K562 (cell line): ENCODE measurements at regions of chr1 and their contacts with region 1.

Region 1: GRCh38 chr1:244272471-244273261 is 179.0 kb downstream of the ADSS2 start:
- DNase-seq: peak; percentile 83 to 90 (median 89)
- ATAC-seq: peak; percentile 92
- H3K4me3 ChIP-seq: no peak overlapping the region
- H3K27ac ChIP-seq: no peak overlapping the region
- H3K4me1 ChIP-seq: peaks cover 6 to 12% of the 10 kb centered on the region in 2 experiments; a peak in 4 of 5 replicates
- H3K27me3 ChIP-seq: peaks cover 14 to 28% of the 10 kb centered on the region in 2 experiments; a peak in 3 of 5 replicates
- CTCF ChIP-seq: peak; percentile 98 to 100 (median 99)
- EP300 ChIP-seq: no peak
- POLR2A ChIP-seq: no peak
- RAD21 ChIP-seq: peak; percentile 99 to 100

Region 2: DNA sequence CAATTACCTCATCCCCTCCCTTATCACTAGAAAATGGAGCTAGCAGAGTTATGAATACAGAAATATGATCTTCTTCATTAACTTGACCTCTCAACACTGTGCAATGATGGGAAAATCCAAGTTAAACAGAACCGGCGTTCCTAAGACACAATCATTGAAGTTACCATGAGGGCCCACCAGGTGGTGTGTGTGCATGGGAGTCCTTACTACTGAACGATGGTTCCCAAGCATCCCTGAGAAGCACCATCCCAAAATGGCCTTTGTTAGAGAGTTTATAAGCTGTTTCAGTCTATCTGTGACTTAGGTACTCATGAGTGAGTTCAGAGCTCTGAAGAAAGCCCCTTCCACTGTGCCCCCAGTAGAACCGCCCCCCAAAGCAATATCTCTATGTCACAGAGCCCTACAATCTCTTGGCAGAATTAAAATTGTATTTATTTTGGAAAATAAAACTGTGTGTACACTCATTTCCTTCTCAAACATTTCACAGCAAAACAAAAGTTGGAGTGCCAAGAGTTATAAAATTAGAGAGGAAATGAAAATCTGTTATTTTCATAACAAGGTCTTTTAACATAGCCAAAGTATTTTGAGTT is 1805.0 kb before region 1 on chr1:
- CTCF ChIA-PET with region 1: no interaction called
- POLR2A ChIA-PET with region 1: no interaction called
- in situ Hi-C with region 1: loop called (anchors 25 kb)
- intact Hi-C with region 1: loop called (anchors 5 kb)
- DNase-seq: peak; percentile 42 to 54 (median 50)
- ATAC-seq: peak; percentile 88
- H3K4me3 ChIP-seq: no peak overlapping the region
- H3K27ac ChIP-seq: no peak overlapping the region
- H3K4me1 ChIP-seq: no peaks in the 10 kb centered on the region
- H3K27me3 ChIP-seq: no peaks in the 10 kb centered on the region
- CTCF ChIP-seq: peak; percentile 50 to 59 (median 58)
- EP300 ChIP-seq: no peak
- POLR2A ChIP-seq: no peak
- RAD21 ChIP-seq: peak; percentile 34 to 67

Region 3: DNA sequence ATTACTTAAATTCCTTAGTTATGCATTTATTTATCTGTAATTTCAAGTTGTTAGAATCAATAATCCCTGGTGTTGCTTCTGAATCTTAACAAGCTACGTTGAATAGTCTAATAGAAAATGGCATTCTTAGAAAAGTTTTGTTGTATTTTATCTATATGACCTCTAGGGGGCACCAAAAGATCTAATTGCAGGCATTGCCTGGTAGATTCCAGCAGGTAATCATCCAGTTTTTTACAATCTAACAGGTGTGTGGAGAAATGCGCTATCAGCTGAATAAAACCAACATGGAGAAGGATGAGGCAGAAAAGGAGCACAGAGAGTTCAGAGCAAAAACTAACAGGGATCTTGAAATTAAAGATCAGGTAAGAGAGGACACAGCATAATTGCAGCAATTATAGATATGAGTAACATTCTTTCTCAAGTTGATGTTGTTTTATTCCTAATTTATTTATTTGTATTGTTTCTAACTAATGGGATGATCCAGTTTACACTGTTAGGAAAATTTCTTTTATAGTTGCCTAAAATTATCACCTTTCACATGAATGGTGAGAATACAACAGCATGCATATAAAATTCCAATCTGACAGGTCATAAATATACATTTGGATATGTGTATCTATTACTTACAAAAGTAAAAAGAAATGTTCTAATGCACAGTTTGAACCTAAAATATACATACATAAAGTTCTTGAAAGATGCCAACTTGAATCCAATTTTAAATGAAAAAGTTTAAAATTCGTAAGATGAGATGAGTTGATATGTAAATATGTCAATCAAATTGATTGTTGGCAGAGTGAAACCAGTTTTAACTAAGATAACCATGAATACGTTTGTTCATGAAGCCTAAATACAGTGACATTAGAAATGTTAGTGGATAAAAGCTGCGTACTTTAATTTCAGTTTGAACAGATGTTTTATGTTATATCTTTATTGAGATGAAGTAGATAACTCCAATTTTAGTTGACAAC is 928.4 kb before region 1 on chr1:
- CTCF ChIA-PET with region 1: interaction called, 37 read pairs
- POLR2A ChIA-PET with region 1: no interaction called
- in situ Hi-C with region 1: loop called (anchors 10 kb)
- intact Hi-C with region 1: loop called (anchors 1 kb)
- DNase-seq: peak; percentile 53 to 61 (median 56)
- ATAC-seq: peak; percentile 71
- H3K4me3 ChIP-seq: no peak overlapping the region
- H3K27ac ChIP-seq: no peak overlapping the region
- H3K4me1 ChIP-seq: no peaks in the 10 kb centered on the region
- H3K27me3 ChIP-seq: no peaks in the 10 kb centered on the region
- CTCF ChIP-seq: peak; percentile 58 to 86 (median 66); a peak in 5 of 6 replicates
- EP300 ChIP-seq: no peak
- POLR2A ChIP-seq: no peak
- RAD21 ChIP-seq: peak; percentile 85 to 88

Region 4: GRCh38 chr1:243708210-243708609 is 564.5 kb before region 1 on chr1:
- CTCF ChIA-PET with region 1: interaction called, 6 read pairs
- POLR2A ChIA-PET with region 1: no interaction called
- in situ Hi-C with region 1: no loop called
- intact Hi-C with region 1: loop called (anchors 5 kb)
- DNase-seq: no peak
- ATAC-seq: no peak
- H3K4me3 ChIP-seq: no peak overlapping the region
- H3K27ac ChIP-seq: no peak overlapping the region
- H3K4me1 ChIP-seq: no peaks in the 10 kb centered on the region
- H3K27me3 ChIP-seq: no peaks in the 10 kb centered on the region
- CTCF ChIP-seq: peak in 1 of 3 experiments; percentile 14; a peak in 1 of 6 replicates
- EP300 ChIP-seq: no peak
- POLR2A ChIP-seq: no peak
- RAD21 ChIP-seq: peak; percentile 17 to 41; a peak in 3 of 4 replicates

Region 5: GRCh38 chr1:243946946-243947345 is 325.7 kb before region 1 on chr1:
- CTCF ChIA-PET with region 1: no interaction called
- POLR2A ChIA-PET with region 1: no interaction called
- in situ Hi-C with region 1: no loop called
- intact Hi-C with region 1: loop called (anchors 5 kb)
- DNase-seq: peak; percentile 34 to 56 (median 44)
- ATAC-seq: peak; percentile 91
- H3K4me3 ChIP-seq: no peak overlapping the region
- H3K27ac ChIP-seq: no peak overlapping the region
- H3K4me1 ChIP-seq: no peaks in the 10 kb centered on the region; a peak in 1 of 5 replicates
- H3K27me3 ChIP-seq: peaks cover 5 to 35% of the 10 kb centered on the region in 2 experiments; a peak in 4 of 5 replicates
- CTCF ChIP-seq: peak; percentile 56 to 69 (median 63)
- EP300 ChIP-seq: no peak
- POLR2A ChIP-seq: no peak
- RAD21 ChIP-seq: peak in 1 of 2 experiments; percentile 62; a peak in 2 of 4 replicates

Region 6: GRCh38 chr1:244234009-244234643 is 38.5 kb before region 1 on chr1:
- CTCF ChIA-PET with region 1: interaction called, 4 read pairs
- POLR2A ChIA-PET with region 1: no interaction called
- in situ Hi-C with region 1: no loop called
- intact Hi-C with region 1: loop called (anchors 1 kb)
- DNase-seq: peak in 1 of 4 experiments; percentile 32
- ATAC-seq: peak; percentile 71
- H3K4me3 ChIP-seq: no peak overlapping the region
- H3K27ac ChIP-seq: no peak overlapping the region
- H3K4me1 ChIP-seq: peaks cover 0 to 2% of the 10 kb centered on the region in 2 experiments; a peak in 1 of 5 replicates
- H3K27me3 ChIP-seq: peaks cover 63 to 82% of the 10 kb centered on the region in 2 experiments
- CTCF ChIP-seq: peak in 2 of 3 experiments; percentile 15 to 21; a peak in 1 of 6 replicates
- EP300 ChIP-seq: no peak
- POLR2A ChIP-seq: no peak
- RAD21 ChIP-seq: peak in 1 of 2 experiments; percentile 21; a peak in 1 of 4 replicates